Ascending aorta (tissue), 2 donors: ENCODE measurements at regions of chr7 and their contacts with region 1.

Region 1: GRCh38 chr7:129433847-129434674 is at the start of gene STRIP2:
- DNase-seq: peak; percentile 68 to 93
- H3K4me3 ChIP-seq: peak within 1 kb of the TSS; percentile 75 to 80
- H3K27ac ChIP-seq: peak within 1 kb of the TSS in 1 of 2 donors; percentile 9
- H3K4me1 ChIP-seq: peaks cover 3 to 7% of the 10 kb centered on the region in 2 donors
- H3K27me3 ChIP-seq: no peaks in the 10 kb centered on the region
- CTCF ChIP-seq: no peak
- total RNA-seq, gene STRIP2: 2.3 TPM

Region 2: GRCh38 chr7:129343099-129343700 is 90.9 kb before region 1 on chr7:
- intact Hi-C with region 1: no loop called
- DNase-seq: no peak
- H3K4me3 ChIP-seq: no peak overlapping the region
- H3K27ac ChIP-seq: no peak overlapping the region
- H3K4me1 ChIP-seq: no peaks in the 10 kb centered on the region
- H3K27me3 ChIP-seq: no peaks in the 10 kb centered on the region
- CTCF ChIP-seq: peak in 2 of 3 experiments; percentile 39 to 55

Region 3: GRCh38 chr7:129611246-129612111 is 177.4 kb after region 1 on chr7 and contains the start of gene NRF1:
- intact Hi-C with region 1: loop called (anchors 2 kb)
- DNase-seq: peak; percentile 45 to 93
- H3K4me3 ChIP-seq: peak within 1 kb of the TSS; percentile 69 to 91
- H3K27ac ChIP-seq: peak within 1 kb of the TSS; percentile 93 to 99
- H3K4me1 ChIP-seq: peaks cover 6 to 26% of the 10 kb centered on the region in 2 donors
- H3K27me3 ChIP-seq: no peaks in the 10 kb centered on the region
- CTCF ChIP-seq: peak in 2 of 3 experiments; percentile 10 to 39
- total RNA-seq, gene NRF1: 3.1 TPM